Posterior cingulate gyrus (tissue), 11 donors: ENCODE measurements at regions of chr2 and their contacts with region 1.

Region 1: GRCh38 chr2:199739413-199740110 is 111.4 kb downstream of the FTCDNL1 start:
- DNase-seq: peak; percentile 61 to 96 (median 84)

Region 2: GRCh38 chr2:198309673-198310280 is 1429.8 kb before region 1 on chr2:
- intact Hi-C with region 1: loop called (anchors 2 kb)
- DNase-seq: peak in 4 of 10 donors; percentile 46 to 65 (median 54)

Region 3: DNA sequence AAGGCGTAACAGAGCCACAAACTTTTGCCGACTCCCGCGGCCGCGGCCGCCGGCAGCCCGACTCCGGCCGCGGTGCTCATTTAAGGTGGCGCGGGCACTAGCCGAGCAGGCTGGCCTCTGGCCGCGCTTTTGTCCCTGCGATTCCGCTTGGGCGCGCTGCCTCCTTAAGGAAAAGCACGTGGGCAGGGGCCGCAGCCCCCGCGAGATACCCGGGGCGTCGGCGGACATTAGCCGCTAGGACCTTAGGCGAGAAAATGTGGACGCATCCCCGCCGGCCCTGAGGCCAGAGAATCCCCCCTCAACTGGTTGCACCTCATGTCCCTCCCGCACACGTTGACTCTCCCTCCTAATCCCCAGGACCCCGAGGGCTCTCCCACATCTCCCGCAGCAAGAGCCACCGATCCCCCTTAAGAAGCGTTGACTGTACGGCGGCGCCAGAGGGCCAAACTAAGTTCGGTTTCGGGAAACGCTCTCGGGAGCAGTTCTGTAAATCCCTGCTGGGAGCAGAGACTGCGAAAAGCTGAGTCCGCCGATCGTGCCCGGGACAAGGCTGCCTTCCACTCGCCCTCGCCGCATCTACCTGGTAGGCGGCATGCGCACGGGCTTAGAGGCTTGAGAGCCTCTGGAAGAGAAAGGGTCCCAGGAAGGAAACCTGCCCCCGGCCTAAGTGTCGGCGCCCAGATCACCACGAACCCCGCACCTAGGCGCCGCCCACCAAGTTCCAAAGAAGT is 280.1 kb before region 1 on chr2:
- intact Hi-C with region 1: loop called (anchors 10 kb)
- DNase-seq: peak; percentile 88 to 99 (median 94)

Region 4: GRCh38 chr2:199704358-199705238 is 35.0 kb before region 1 on chr2:
- intact Hi-C with region 1: loop called (anchors 2 kb)
- DNase-seq: peak in 4 of 10 donors; percentile 8 to 50 (median 26)

Region 5: GRCh38 chr2:199861132-199861774 is 121.7 kb after region 1 on chr2:
- intact Hi-C with region 1: loop called (anchors 2 kb)
- DNase-seq: no peak

Region 6: DNA sequence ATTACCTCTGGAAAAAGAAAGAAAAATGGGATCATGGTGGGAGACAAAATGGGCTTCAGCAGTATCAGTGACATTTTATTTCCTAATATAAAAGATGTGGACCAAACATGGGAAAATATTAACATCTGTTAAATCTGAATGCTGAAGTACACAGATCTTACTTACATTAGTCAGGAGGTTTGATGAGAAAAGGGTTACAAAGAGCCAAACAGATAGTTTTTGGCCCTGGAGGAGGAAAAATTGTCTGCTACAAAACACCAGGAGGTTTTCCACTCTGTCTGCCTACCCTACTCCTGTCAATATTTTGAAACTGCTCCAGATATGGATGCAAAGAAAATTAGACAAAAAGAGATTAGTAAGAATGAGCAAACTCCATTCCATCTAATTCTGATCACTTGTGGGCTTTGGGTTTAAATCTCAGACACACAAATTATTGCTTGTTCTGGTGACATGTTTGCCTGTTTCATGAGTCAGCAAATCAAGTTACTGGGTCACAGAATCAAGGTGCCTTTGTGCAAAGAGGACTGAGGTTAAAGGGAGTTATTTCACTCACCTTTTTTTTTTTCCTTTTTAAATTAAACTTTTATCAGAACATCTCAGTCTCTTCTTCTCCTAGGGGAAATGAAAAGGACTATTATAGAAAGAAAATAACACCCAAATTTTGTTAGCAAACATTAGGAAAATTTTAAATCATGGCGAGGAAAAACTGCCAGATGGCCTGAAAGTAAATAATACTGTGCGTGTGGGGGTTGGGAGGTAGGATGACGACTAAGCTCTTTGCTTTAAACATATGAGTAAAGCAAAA is 479.9 kb after region 1 on chr2:
- intact Hi-C with region 1: no loop called
- DNase-seq: no peak